ENCODE measurements at regions of chr19 and their contacts with region 1.

Region 1: GRCh38 chr19:36081385-36081784 is 26.7 kb downstream of the WDR62 start:
- DNase-seq: no peak
- H3K4me3 ChIP-seq: no peak overlapping the region
- H3K27ac ChIP-seq: no peak overlapping the region
- H3K4me1 ChIP-seq: no peaks in the 10 kb centered on the region
- H3K27me3 ChIP-seq: no peaks in the 10 kb centered on the region
- CTCF ChIP-seq: no peak

Region 2: DNA sequence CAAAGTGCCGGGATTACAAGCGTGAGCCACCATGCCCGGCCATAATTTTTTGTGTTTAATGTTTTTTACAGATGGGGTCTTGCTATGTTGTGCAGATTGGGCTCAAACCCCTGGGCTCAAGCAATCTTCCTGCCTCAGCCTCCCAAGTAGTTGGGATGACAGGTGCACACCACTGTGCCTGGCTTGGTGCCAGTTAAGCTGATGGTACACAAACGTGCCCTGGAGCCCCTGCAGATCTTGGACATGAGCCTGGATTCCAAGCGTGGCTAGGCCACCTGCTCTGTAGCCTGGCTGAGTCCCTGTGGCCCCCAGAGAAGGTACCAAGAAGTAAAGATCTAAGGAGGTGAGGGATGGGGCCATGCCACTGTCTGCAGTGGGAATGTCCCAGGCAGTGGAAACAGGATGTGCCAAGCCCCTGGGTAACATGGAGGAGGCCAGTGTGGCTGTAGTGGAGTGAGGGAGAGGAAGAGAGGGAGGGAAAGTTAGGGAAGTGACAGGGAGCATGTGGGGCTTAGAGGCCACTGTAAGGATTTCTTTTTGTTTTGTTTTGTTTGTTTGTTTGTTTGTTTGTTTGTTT is 275.8 kb before region 1 on chr19:
- CTCF ChIA-PET with region 1: no interaction called
- dilution Hi-C with region 1: no loop called
- in situ Hi-C with region 1: no loop called
- intact Hi-C with region 1: no loop called
- DNase-seq: no peak
- H3K4me3 ChIP-seq: no peak overlapping the region
- H3K27ac ChIP-seq: no peak overlapping the region
- H3K4me1 ChIP-seq: no peaks in the 10 kb centered on the region
- H3K27me3 ChIP-seq: no peaks in the 10 kb centered on the region
- CTCF ChIP-seq: no peak

Region 3: GRCh38 chr19:35986664-35987570 is 94.5 kb before region 1 on chr19:
- CTCF ChIA-PET with region 1: no interaction called
- dilution Hi-C with region 1: loop called (anchors 5 kb)
- in situ Hi-C with region 1: no loop called
- intact Hi-C with region 1: no loop called
- DNase-seq: no peak
- H3K4me3 ChIP-seq: peak overlapping the region in 1 of 3 experiments; percentile 9
- H3K27ac ChIP-seq: no peak overlapping the region
- H3K4me1 ChIP-seq: no peaks in the 10 kb centered on the region
- H3K27me3 ChIP-seq: peaks cover 9% of the 10 kb centered on the region
- CTCF ChIP-seq: no peak

Region 4: GRCh38 chr19:36172852-36173251 is 91.5 kb after region 1 on chr19:
- CTCF ChIA-PET with region 1: no interaction called
- dilution Hi-C with region 1: no loop called
- in situ Hi-C with region 1: no loop called
- intact Hi-C with region 1: no loop called
- DNase-seq: no peak
- H3K4me3 ChIP-seq: no peak overlapping the region
- H3K27ac ChIP-seq: no peak overlapping the region
- H3K4me1 ChIP-seq: no peaks in the 10 kb centered on the region
- H3K27me3 ChIP-seq: no peaks in the 10 kb centered on the region
- CTCF ChIP-seq: no peak